ENCODE measurements at regions of chr13 and their contacts with region 1.

Region 1: GRCh38 chr13:81171065-81171647 is 830.2 kb upstream of the SPRY2 start:
- DNase-seq: no peak
- ATAC-seq: peak; percentile 41
- H3K4me3 ChIP-seq: no peak overlapping the region
- H3K4me1 ChIP-seq: no peaks in the 10 kb centered on the region
- CTCF ChIP-seq: no peak

Region 2: GRCh38 chr13:81395368-81395767 is 224.2 kb after region 1 on chr13:
- intact Hi-C with region 1: loop called in 1 of 2 experiments (anchors 10 kb)
- DNase-seq: peak; percentile 57 to 76 (median 68)
- ATAC-seq: peak; percentile 93
- H3K4me3 ChIP-seq: no peak overlapping the region
- H3K4me1 ChIP-seq: peaks cover 6% of the 10 kb centered on the region
- CTCF ChIP-seq: no peak

Region 3: GRCh38 chr13:81487151-81487550 is 316.0 kb after region 1 on chr13:
- intact Hi-C with region 1: loop called in 1 of 2 experiments (anchors 10 kb)
- DNase-seq: peak in 1 of 3 donors; percentile 38
- ATAC-seq: no peak
- H3K4me3 ChIP-seq: no peak overlapping the region
- H3K4me1 ChIP-seq: no peaks in the 10 kb centered on the region
- CTCF ChIP-seq: no peak

Measured in mucosa of descending colon (tissue), 3 donors.